Upper lobe of right lung (tissue), 1 donor: ENCODE measurements at regions of chr3 and their contacts with region 1.

Region 1: DNA sequence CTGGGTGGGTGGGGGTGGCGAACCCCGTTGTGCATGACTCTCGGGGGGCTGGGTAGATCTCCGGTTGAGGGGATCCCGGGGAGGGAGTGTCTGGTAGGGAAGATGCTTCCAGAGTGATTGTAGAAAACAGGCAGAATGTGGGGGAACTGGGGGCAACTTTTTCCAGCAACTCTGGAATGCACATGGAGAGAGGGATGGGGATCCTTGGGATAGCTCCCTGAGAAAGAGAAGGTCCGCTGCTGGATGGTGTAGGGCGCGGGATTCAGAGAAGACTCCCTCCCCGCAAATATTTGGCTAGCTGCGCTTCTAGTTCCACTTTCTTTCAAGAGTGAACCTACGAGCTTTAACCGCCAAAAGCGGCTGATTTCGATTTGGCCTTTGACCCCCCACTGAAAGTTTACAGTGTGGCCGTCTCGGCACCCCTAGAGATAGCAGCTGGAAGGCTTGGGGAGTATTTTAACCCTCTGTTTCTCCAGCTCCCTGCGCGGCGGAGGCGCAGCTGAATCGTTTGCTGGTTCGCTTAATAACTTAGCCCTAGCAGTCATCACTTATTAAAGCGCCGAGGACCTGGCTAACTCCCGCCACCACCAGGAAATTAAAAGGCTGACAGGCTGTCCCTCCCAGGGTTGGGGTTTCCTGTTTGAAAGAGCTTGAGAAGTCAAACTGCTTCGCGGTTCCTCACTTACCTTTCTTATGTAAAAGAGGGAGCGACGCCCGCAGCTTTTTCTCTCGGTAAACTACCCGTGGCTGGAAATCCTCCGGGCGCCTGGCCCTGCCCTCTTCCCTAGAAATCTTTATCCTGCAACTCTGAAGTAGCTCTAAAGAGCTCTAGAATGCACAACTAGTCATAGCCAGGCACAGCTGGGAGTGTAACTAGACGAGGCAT is 1.2 kb downstream of the PHLDB2 start:
- DNase-seq: peak; percentile 82
- ATAC-seq: peak; percentile 81
- H3K4me3 ChIP-seq: peak overlapping the region; percentile 75
- H3K27ac ChIP-seq: peak overlapping the region; percentile 95
- H3K4me1 ChIP-seq: peaks cover 29% of the 10 kb centered on the region
- H3K27me3 ChIP-seq: no peaks in the 10 kb centered on the region
- CTCF ChIP-seq: peak; percentile 58

Region 2: DNA sequence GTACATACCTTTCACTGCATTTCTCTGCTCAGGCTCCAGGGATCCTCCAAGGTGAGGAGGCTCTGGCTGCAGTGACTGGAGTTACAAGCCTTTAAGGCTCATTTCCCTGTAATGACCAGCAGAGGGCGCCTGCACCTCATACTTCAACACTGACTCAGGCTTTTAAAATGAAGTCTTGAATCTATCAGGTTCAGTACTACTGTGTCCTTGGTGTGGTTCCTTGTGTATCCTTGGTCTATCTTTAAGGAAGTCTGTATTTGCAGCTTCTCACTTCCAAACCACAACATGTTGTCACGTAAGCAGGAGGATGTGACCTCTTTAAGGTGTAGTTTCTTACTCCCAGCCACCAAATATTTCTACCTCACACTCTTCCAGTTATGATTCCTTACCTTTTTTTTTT is 142.6 kb before region 1 on chr3:
- intact Hi-C with region 1: loop called (anchors 5 kb)
- DNase-seq: peak; percentile 69
- ATAC-seq: peak; percentile 98
- H3K4me3 ChIP-seq: no peak overlapping the region
- H3K27ac ChIP-seq: no peak overlapping the region
- H3K4me1 ChIP-seq: no peaks in the 10 kb centered on the region
- H3K27me3 ChIP-seq: no peaks in the 10 kb centered on the region
- CTCF ChIP-seq: peak; percentile 94

Region 3: GRCh38 chr3:111910806-111911205 is 50.6 kb after region 1 on chr3:
- intact Hi-C with region 1: loop called (anchors 10 kb)
- DNase-seq: no peak
- ATAC-seq: peak; percentile 49
- H3K4me3 ChIP-seq: no peak overlapping the region
- H3K27ac ChIP-seq: no peak overlapping the region
- H3K4me1 ChIP-seq: no peaks in the 10 kb centered on the region
- H3K27me3 ChIP-seq: no peaks in the 10 kb centered on the region
- CTCF ChIP-seq: no peak

Region 4: GRCh38 chr3:111944377-111944776 is 84.2 kb after region 1 on chr3:
- intact Hi-C with region 1: no loop called
- DNase-seq: no peak
- ATAC-seq: no peak
- H3K4me3 ChIP-seq: no peak overlapping the region
- H3K27ac ChIP-seq: no peak overlapping the region
- H3K4me1 ChIP-seq: no peaks in the 10 kb centered on the region
- H3K27me3 ChIP-seq: no peaks in the 10 kb centered on the region
- CTCF ChIP-seq: no peak

Region 5: DNA sequence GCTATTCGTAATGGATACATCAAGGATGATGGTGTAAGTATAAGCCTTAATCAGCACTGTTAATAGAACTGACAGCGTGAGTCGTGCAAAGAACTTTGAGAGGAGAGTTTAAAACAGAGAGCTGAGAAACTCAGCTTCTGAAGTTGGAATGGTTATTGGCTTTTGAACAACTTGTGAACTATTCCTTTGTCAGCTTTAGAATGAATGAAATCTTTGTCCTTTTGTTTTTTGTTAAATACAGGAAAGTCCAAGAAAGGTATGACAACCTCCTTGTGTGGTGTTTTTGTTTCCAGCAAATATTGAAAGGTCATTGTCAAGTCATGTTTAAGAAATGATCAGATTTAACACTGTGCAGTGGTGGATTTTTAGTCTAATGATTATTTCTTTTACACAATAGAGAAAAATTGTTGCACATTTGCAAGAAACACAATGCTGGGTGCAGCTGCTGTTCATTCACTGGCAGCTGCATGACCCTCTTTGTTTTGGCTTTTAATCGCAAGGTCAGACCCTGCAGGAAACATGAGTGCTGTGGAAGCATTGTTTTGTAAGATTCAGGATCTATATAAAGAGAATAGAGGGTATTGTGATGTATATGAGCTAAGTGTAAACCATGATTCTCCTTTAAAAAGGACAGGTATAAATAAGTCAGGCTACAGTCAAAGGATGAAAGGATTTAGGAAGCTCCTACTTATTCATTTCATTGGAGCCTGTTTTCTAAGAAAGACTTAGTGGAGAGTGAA is 96.9 kb after region 1 on chr3:
- intact Hi-C with region 1: loop called (anchors 10 kb)
- DNase-seq: no peak
- ATAC-seq: no peak
- H3K4me3 ChIP-seq: no peak overlapping the region
- H3K27ac ChIP-seq: no peak overlapping the region
- H3K4me1 ChIP-seq: no peaks in the 10 kb centered on the region
- H3K27me3 ChIP-seq: no peaks in the 10 kb centered on the region
- CTCF ChIP-seq: no peak